B cell (primary cell): ENCODE measurements at regions of chr14 and their contacts with region 1.

Region 1: GRCh38 chr14:68795597-68796417 is 2.9 kb upstream of the ZFP36L1 start:
- DNase-seq: peak; percentile 96
- ATAC-seq: peak; percentile 39
- H3K4me3 ChIP-seq: peak overlapping the region; percentile 59 to 100 (median 94)
- H3K4me3 Mint-ChIP-seq: peak overlapping the region; percentile 97
- H3K27ac ChIP-seq: peak overlapping the region; percentile 100
- H3K27ac Mint-ChIP-seq: peak overlapping the region; percentile 100
- H3K4me1 ChIP-seq: peaks cover 30 to 38% of the 10 kb centered on the region in 2 donors
- H3K4me1 Mint-ChIP-seq: peaks cover 36% of the 10 kb centered on the region
- H3K27me3 ChIP-seq: no peaks in the 10 kb centered on the region
- H3K27me3 Mint-ChIP-seq: no peaks in the 10 kb centered on the region
- CTCF ChIP-seq: peak; percentile 62

Region 2: DNA sequence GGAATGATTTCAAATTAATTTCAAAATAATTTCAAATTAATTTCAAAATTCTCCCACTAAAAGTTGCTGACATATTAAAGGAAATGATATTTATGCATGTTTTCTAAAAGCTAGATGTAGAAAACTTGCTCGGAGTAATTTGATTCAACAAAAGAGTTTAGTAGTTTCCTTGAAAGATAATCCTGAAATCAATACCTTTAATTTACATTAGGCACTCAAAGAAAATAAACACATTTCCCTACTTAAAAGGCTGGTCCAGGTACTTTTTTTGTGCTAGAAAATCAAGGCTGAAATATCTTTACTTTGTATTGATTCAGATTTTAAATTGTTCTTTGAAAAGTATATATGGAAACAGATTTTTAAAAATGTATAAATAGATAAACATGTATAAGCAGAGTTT is 605.8 kb before region 1 on chr14:
- CTCF ChIA-PET with region 1: no interaction called
- POLR2A ChIA-PET with region 1: no interaction called
- intact Hi-C with region 1: no loop called
- DNase-seq: no peak
- ATAC-seq: no peak
- H3K4me3 ChIP-seq: no peak overlapping the region
- H3K4me3 Mint-ChIP-seq: no peak overlapping the region
- H3K27ac ChIP-seq: no peak overlapping the region
- H3K27ac Mint-ChIP-seq: no peak overlapping the region
- H3K4me1 ChIP-seq: no peaks in the 10 kb centered on the region
- H3K4me1 Mint-ChIP-seq: no peaks in the 10 kb centered on the region
- H3K27me3 ChIP-seq: no peaks in the 10 kb centered on the region
- H3K27me3 Mint-ChIP-seq: no peaks in the 10 kb centered on the region
- CTCF ChIP-seq: no peak

Region 3: DNA sequence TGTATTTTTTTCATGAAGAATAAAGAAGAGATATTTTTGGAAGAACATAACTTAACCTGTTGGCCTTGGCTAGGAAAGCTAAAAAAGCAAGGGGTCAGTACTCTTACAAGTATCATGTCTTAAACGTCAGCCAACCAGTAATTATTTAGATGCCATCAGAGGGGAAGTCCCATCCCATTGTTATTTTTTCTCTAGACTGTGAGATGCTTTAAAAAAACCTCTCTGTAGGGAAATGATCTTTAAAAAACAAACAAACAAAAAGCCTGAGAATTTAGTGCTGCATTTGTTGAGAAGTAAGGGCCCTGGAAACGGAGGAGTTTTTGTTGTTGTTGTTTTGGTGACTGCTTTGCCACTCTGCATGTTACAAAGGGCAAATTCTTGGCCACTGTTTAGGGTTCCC is 477.0 kb before region 1 on chr14:
- CTCF ChIA-PET with region 1: no interaction called
- POLR2A ChIA-PET with region 1: interaction called, 12 read pairs
- intact Hi-C with region 1: no loop called
- DNase-seq: no peak
- ATAC-seq: no peak
- H3K4me3 ChIP-seq: no peak overlapping the region
- H3K4me3 Mint-ChIP-seq: no peak overlapping the region
- H3K27ac ChIP-seq: no peak overlapping the region
- H3K27ac Mint-ChIP-seq: no peak overlapping the region
- H3K4me1 ChIP-seq: peaks cover 41 to 68% of the 10 kb centered on the region in 2 donors
- H3K4me1 Mint-ChIP-seq: peaks cover 68% of the 10 kb centered on the region
- H3K27me3 ChIP-seq: no peaks in the 10 kb centered on the region
- H3K27me3 Mint-ChIP-seq: no peaks in the 10 kb centered on the region
- CTCF ChIP-seq: no peak

Region 4: DNA sequence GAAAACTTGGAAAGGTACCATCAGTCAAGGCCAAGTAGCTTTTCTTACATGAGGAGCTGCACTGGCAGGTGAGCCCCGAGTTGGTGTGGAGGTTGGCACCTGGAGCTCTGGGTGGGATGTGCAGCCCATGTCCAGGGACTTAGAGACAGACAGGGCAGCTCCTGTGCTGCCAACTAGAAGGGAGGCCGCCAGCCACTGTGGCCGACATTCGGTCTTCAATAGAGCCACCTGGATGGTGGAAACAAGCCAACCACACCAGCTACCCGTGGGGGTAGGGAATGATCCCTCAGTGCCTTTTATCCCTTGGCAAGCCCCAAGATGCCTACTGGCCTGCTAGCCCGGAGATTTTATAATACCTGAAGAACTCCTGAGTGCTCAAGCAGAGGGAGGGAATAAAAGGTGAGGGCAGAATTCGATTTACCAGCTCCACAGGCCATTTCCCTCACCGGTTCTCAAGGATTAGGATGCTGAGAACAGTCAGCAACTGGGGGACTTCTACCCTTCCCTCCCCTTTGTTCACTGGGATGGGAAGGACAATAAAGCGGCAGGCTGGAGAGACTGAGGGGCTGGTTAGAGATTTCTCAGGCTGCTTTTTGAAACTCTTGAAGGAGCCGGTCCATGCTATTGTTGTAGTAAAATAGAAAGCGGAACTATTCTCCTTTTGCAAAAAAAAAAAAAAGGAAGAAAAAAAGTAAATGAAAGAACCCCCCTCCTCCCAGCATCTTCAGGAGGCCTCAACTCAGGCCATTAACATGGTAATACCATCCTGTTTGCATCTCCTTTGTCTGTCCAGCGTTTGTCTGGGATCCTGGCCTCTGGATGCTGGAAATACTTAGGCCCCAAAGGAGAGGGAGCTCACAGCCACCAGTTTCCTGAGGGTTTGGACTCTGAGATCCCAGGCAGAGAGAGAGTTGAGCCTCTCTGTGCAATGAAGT is 324.5 kb before region 1 on chr14:
- CTCF ChIA-PET with region 1: no interaction called
- POLR2A ChIA-PET with region 1: interaction called, 15 read pairs
- intact Hi-C with region 1: no loop called
- DNase-seq: peak; percentile 79
- ATAC-seq: peak; percentile 82
- H3K4me3 ChIP-seq: peak overlapping the region in 1 of 5 experiments; percentile 28
- H3K4me3 Mint-ChIP-seq: peak overlapping the region; percentile 57
- H3K27ac ChIP-seq: peak overlapping the region; percentile 94
- H3K27ac Mint-ChIP-seq: peak overlapping the region; percentile 97
- H3K4me1 ChIP-seq: peaks cover 78 to 80% of the 10 kb centered on the region in 2 donors
- H3K4me1 Mint-ChIP-seq: peaks cover 73% of the 10 kb centered on the region
- H3K27me3 ChIP-seq: no peaks in the 10 kb centered on the region
- H3K27me3 Mint-ChIP-seq: no peaks in the 10 kb centered on the region
- CTCF ChIP-seq: no peak

Region 5: GRCh38 chr14:68685419-68686204 is 110.2 kb before region 1 on chr14:
- CTCF ChIA-PET with region 1: interaction called, 97 read pairs
- POLR2A ChIA-PET with region 1: interaction called, 44 read pairs
- intact Hi-C with region 1: loop called (anchors 1 kb)
- DNase-seq: peak; percentile 95
- ATAC-seq: peak; percentile 81
- H3K4me3 ChIP-seq: peak overlapping the region in 2 of 5 experiments; percentile 18 to 45
- H3K4me3 Mint-ChIP-seq: peak overlapping the region; percentile 82
- H3K27ac ChIP-seq: peak overlapping the region; percentile 94 to 98
- H3K27ac Mint-ChIP-seq: peak overlapping the region; percentile 99
- H3K4me1 ChIP-seq: peaks cover 70 to 83% of the 10 kb centered on the region in 2 donors
- H3K4me1 Mint-ChIP-seq: peaks cover 90% of the 10 kb centered on the region
- H3K27me3 ChIP-seq: no peaks in the 10 kb centered on the region
- H3K27me3 Mint-ChIP-seq: no peaks in the 10 kb centered on the region
- CTCF ChIP-seq: no peak

Region 6: GRCh38 chr14:68816262-68816942 is 20.6 kb after region 1 on chr14:
- CTCF ChIA-PET with region 1: interaction called, 263 read pairs
- POLR2A ChIA-PET with region 1: interaction called, 416 read pairs
- intact Hi-C with region 1: loop called (anchors 1 kb)
- DNase-seq: peak; percentile 94
- ATAC-seq: peak; percentile 73
- H3K4me3 ChIP-seq: peak overlapping the region; percentile 51 to 80 (median 74)
- H3K4me3 Mint-ChIP-seq: peak overlapping the region; percentile 87
- H3K27ac ChIP-seq: peak overlapping the region; percentile 89 to 94
- H3K27ac Mint-ChIP-seq: peak overlapping the region; percentile 98
- H3K4me1 ChIP-seq: peaks cover 56 to 70% of the 10 kb centered on the region in 2 donors
- H3K4me1 Mint-ChIP-seq: peaks cover 82% of the 10 kb centered on the region
- H3K27me3 ChIP-seq: no peaks in the 10 kb centered on the region
- H3K27me3 Mint-ChIP-seq: no peaks in the 10 kb centered on the region
- CTCF ChIP-seq: peak; percentile 97